ENCODE measurements at regions of chr5 and their contacts with region 1.

Region 1: DNA sequence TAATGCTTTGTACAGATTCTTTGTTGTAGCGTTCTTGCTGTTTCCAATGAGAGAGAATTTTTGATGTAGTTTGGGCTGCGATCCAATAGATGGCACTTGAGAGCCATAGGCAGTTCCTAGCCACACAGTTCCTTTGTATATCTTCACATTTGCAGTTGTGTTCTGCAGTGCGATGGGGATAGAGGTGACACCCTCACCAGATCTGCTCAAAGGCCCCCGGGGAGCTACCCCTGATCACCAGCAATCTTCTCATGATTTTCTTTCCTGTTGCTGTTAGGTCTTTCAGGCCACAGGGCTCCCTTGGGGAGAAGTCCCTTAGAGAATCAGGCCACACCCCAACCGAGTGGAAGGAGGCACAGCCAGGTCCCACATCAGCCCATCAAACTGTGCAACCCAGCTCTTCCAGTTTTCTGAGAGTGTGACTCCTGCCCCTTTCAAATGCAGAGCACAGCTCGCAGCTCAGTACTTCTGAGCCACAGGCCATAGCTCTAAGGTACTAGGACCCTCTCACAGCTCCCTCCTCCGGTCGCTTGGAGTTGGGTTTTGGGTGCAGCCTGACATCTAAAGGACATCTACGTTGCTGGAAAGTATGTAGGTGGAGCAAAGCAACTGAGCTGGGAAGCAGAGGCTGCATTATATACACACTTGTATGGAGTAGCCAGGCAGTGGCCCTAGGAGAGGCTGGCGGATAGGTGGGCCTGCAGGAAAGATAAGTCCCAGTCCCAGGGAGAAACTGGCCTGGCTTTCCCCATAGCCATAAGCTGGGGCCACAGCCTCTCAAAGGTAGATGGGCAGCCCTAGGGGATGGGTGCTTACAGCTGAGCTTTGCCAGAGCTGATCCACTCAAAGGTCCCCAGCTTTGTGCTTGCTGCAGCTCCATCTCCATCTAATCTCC is 353.5 kb downstream of the SLCO4C1 start:
- DNase-seq: peak; percentile 53
- H3K4me3 Mint-ChIP-seq: no peak overlapping the region
- H3K27ac Mint-ChIP-seq: no peak overlapping the region
- H3K4me1 Mint-ChIP-seq: no peaks in the 10 kb centered on the region
- H3K27me3 Mint-ChIP-seq: peaks cover 17% of the 10 kb centered on the region
- CTCF ChIP-seq: peak; percentile 62

Region 2: GRCh38 chr5:101829255-101829654 is 113.3 kb before region 1 on chr5:
- CTCF ChIA-PET with region 1: no interaction called
- POLR2A ChIA-PET with region 1: no interaction called
- intact Hi-C with region 1: no loop called
- DNase-seq: no peak
- H3K4me3 Mint-ChIP-seq: no peak overlapping the region
- H3K27ac Mint-ChIP-seq: no peak overlapping the region
- H3K4me1 Mint-ChIP-seq: no peaks in the 10 kb centered on the region
- H3K27me3 Mint-ChIP-seq: no peaks in the 10 kb centered on the region
- CTCF ChIP-seq: no peak

Region 3: DNA sequence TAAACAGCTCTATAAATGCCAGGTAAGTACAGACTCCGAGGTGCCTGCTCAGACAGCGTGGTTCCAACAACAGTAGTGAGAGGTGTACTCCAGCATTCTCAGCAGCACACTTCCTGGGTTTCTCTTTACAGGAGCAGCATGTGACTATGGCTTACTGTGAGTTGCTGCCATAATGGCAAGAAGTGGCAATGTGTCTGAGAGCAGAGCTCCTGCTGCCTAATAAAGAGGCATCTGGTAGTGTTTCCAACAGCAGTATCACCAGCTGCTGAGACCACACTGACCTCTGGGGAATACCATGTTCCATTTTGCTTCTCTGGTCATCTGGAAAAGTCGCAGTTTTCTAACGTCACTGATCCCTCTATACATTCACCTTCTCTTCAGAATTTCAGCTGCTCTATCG is 44.7 kb before region 1 on chr5:
- CTCF ChIA-PET with region 1: no interaction called
- POLR2A ChIA-PET with region 1: no interaction called
- intact Hi-C with region 1: no loop called
- DNase-seq: no peak
- H3K4me3 Mint-ChIP-seq: no peak overlapping the region
- H3K27ac Mint-ChIP-seq: no peak overlapping the region
- H3K4me1 Mint-ChIP-seq: no peaks in the 10 kb centered on the region
- H3K27me3 Mint-ChIP-seq: peaks cover 11% of the 10 kb centered on the region
- CTCF ChIP-seq: no peak

Region 4: GRCh38 chr5:101929628-101930027 is 12.9 kb before region 1 on chr5:
- CTCF ChIA-PET with region 1: interaction called, 16 read pairs
- POLR2A ChIA-PET with region 1: no interaction called
- intact Hi-C with region 1: no loop called
- DNase-seq: no peak
- H3K4me3 Mint-ChIP-seq: no peak overlapping the region
- H3K27ac Mint-ChIP-seq: no peak overlapping the region
- H3K4me1 Mint-ChIP-seq: no peaks in the 10 kb centered on the region
- H3K27me3 Mint-ChIP-seq: no peaks in the 10 kb centered on the region
- CTCF ChIP-seq: no peak

Region 5: DNA sequence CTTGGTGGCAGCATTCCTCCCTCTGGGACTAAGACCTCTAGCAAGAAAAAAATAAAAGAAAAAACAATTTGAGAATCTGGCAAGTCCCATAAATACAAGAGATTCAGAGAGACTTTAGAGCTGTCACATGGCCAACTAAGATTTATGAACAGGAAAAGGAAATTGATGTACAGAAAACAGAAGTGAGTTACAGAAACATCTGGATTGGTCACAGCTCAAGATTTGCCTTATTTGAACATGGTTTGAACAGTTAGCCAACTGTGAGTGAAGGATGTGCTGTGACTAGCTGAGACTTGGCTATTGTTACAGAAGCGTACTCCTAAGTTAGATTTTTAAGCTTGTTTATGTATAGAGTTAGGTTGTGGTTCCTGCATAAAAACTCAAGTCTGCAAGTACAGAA is 13.3 kb after region 1 on chr5:
- CTCF ChIA-PET with region 1: interaction called, 36 read pairs
- POLR2A ChIA-PET with region 1: interaction called, 5 read pairs
- intact Hi-C with region 1: no loop called
- DNase-seq: no peak
- H3K4me3 Mint-ChIP-seq: no peak overlapping the region
- H3K27ac Mint-ChIP-seq: no peak overlapping the region
- H3K4me1 Mint-ChIP-seq: no peaks in the 10 kb centered on the region
- H3K27me3 Mint-ChIP-seq: peaks cover 35% of the 10 kb centered on the region
- CTCF ChIP-seq: no peak

Region 6: GRCh38 chr5:101977729-101978345 is 35.3 kb after region 1 on chr5:
- CTCF ChIA-PET with region 1: interaction called, 62 read pairs
- POLR2A ChIA-PET with region 1: no interaction called
- intact Hi-C with region 1: loop called (anchors 1 kb)
- DNase-seq: peak; percentile 58
- H3K4me3 Mint-ChIP-seq: no peak overlapping the region
- H3K27ac Mint-ChIP-seq: no peak overlapping the region
- H3K4me1 Mint-ChIP-seq: no peaks in the 10 kb centered on the region
- H3K27me3 Mint-ChIP-seq: peaks cover 27% of the 10 kb centered on the region
- CTCF ChIP-seq: peak; percentile 69

Region 7: GRCh38 chr5:102153003-102153759 is 210.6 kb after region 1 on chr5:
- CTCF ChIA-PET with region 1: interaction called, 40 read pairs
- POLR2A ChIA-PET with region 1: no interaction called
- intact Hi-C with region 1: loop called (anchors 1 kb)
- DNase-seq: peak; percentile 46
- H3K4me3 Mint-ChIP-seq: no peak overlapping the region
- H3K27ac Mint-ChIP-seq: no peak overlapping the region
- H3K4me1 Mint-ChIP-seq: no peaks in the 10 kb centered on the region
- H3K27me3 Mint-ChIP-seq: no peaks in the 10 kb centered on the region
- CTCF ChIP-seq: peak; percentile 63

Region 8: GRCh38 chr5:102223542-102224477 is 281.2 kb after region 1 on chr5:
- CTCF ChIA-PET with region 1: interaction called, 4 read pairs
- POLR2A ChIA-PET with region 1: no interaction called
- intact Hi-C with region 1: loop called (anchors 1 kb)
- DNase-seq: peak; percentile 51
- H3K4me3 Mint-ChIP-seq: no peak overlapping the region
- H3K27ac Mint-ChIP-seq: no peak overlapping the region
- H3K4me1 Mint-ChIP-seq: no peaks in the 10 kb centered on the region
- H3K27me3 Mint-ChIP-seq: peaks cover 22% of the 10 kb centered on the region
- CTCF ChIP-seq: peak; percentile 53

Region 9: GRCh38 chr5:102511666-102512065 is 569.1 kb after region 1 on chr5:
- CTCF ChIA-PET with region 1: interaction called, 3 read pairs
- POLR2A ChIA-PET with region 1: no interaction called
- intact Hi-C with region 1: loop called (anchors 2 kb)
- DNase-seq: peak; percentile 48
- H3K4me3 Mint-ChIP-seq: no peak overlapping the region
- H3K27ac Mint-ChIP-seq: no peak overlapping the region
- H3K4me1 Mint-ChIP-seq: peaks cover 10% of the 10 kb centered on the region
- H3K27me3 Mint-ChIP-seq: no peaks in the 10 kb centered on the region
- CTCF ChIP-seq: no peak